ENCODE measurements at regions of chr1 and their contacts with region 1.

Region 1: GRCh38 chr1:70922196-70922595 is 125.4 kb downstream of the PTGER3 start:
- DNase-seq: no peak
- H3K4me3 Mint-ChIP-seq: no peak overlapping the region
- H3K27ac Mint-ChIP-seq: no peak overlapping the region
- H3K4me1 Mint-ChIP-seq: no peaks in the 10 kb centered on the region
- H3K27me3 Mint-ChIP-seq: no peaks in the 10 kb centered on the region

Region 2: DNA sequence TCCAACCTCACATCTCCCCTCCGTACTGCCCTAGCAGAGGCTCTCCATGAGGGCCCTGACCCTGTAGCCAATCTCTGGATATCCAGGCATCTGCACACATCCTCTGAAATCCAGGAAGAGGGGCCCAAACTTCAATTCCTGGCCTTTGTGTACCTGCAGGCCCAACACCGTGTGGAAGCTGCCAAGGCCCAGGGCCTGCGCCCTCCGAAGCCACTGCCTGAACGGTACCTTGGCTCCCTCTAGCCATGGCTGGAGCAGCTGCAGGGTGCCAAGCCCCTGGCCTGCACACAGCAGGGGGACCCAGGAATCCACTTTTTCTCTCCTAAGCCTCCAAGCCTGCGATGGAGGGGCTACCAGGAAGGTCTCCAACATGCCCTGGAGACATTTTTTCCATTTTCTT is 41.2 kb after region 1 on chr1:
- CTCF ChIA-PET with region 1: no interaction called
- intact Hi-C with region 1: loop called (anchors 1 kb)
- DNase-seq: no peak
- H3K4me3 Mint-ChIP-seq: no peak overlapping the region
- H3K27ac Mint-ChIP-seq: no peak overlapping the region
- H3K4me1 Mint-ChIP-seq: no peaks in the 10 kb centered on the region
- H3K27me3 Mint-ChIP-seq: peaks cover 8% of the 10 kb centered on the region